ENCODE measurements at regions of chr10 and their contacts with region 1.

Region 1: GRCh38 chr10:84139126-84140035 is at the start of gene GHITM:
- DNase-seq: peak; percentile 98 to 100 (median 99)

Region 2: GRCh38 chr10:84205049-84205852 is 65.9 kb after region 1 on chr10:
- intact Hi-C with region 1: loop called (anchors 2 kb)
- DNase-seq: peak; percentile 60 to 93 (median 83)

Region 3: GRCh38 chr10:84256510-84257342 is 117.3 kb after region 1 on chr10:
- intact Hi-C with region 1: loop called (anchors 10 kb)
- DNase-seq: peak in 41 of 42 donors; percentile 44 to 89 (median 72)

Measured in head of caudate nucleus (tissue), 42 donors.